A673 (cell line): ENCODE measurements at regions of chr17 and their contacts with region 1.

Region 1: GRCh38 chr17:66533986-66534385 is 231.6 kb downstream of the PRKCA start:
- DNase-seq: no peak
- H3K4me3 ChIP-seq: no peak overlapping the region
- H3K27ac ChIP-seq: no peak overlapping the region
- H3K4me1 ChIP-seq: peaks cover 8% of the 10 kb centered on the region
- H3K27me3 ChIP-seq: no peaks in the 10 kb centered on the region
- CTCF ChIP-seq: no peak

Region 2: GRCh38 chr17:66373944-66374817 is 159.8 kb before region 1 on chr17:
- CTCF ChIA-PET with region 1: no interaction called
- POLR2A ChIA-PET with region 1: interaction called, 10 read pairs
- intact Hi-C with region 1: no loop called
- DNase-seq: peak; percentile 61
- H3K4me3 ChIP-seq: no peak overlapping the region
- H3K27ac ChIP-seq: no peak overlapping the region
- H3K4me1 ChIP-seq: peaks cover 9% of the 10 kb centered on the region
- H3K27me3 ChIP-seq: no peaks in the 10 kb centered on the region
- CTCF ChIP-seq: no peak